Calu3 (cell line): ENCODE measurements at regions of chr13 and their contacts with region 1.

Region 1: DNA sequence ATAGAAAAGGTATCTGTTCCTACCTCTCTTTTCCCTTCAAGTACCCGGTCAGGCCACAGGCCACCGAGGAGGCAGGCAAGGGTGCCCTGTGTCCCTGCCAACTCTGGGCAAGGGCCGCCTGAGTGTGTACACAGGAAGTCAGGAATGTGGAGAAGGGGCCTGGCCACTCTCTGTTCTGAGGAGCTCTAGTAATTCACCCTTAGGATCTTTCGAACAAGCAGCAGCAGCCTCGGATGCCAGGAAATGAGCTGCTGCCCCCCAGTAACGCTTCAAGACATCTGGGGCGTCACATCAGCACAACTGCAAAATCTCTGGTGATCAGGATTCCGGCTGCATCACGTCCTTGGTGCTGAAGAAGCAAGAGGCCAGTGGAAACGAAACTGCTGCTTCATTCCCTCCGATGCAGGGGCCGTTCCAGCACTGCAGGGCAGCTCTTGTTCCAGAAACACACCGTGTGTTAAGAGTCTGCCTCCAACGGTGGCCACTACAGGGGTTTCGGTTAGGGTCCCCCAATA is 2.0 kb downstream of the RAB20 start:
- DNase-seq: no peak
- H3K4me3 Mint-ChIP-seq: peak overlapping the region; percentile 73
- H3K27ac Mint-ChIP-seq: peak overlapping the region; percentile 42
- H3K4me1 Mint-ChIP-seq: peaks cover 29% of the 10 kb centered on the region
- H3K27me3 Mint-ChIP-seq: no peaks in the 10 kb centered on the region
- CTCF ChIP-seq: no peak

Region 2: GRCh38 chr13:110455941-110456340 is 103.5 kb before region 1 on chr13:
- CTCF ChIA-PET with region 1: interaction called, 5 read pairs
- intact Hi-C with region 1: loop called (anchors 10 kb)
- DNase-seq: peak; percentile 53
- H3K4me3 Mint-ChIP-seq: no peak overlapping the region
- H3K27ac Mint-ChIP-seq: no peak overlapping the region
- H3K4me1 Mint-ChIP-seq: peaks cover 8% of the 10 kb centered on the region
- H3K27me3 Mint-ChIP-seq: no peaks in the 10 kb centered on the region
- CTCF ChIP-seq: peak; percentile 19

Region 3: DNA sequence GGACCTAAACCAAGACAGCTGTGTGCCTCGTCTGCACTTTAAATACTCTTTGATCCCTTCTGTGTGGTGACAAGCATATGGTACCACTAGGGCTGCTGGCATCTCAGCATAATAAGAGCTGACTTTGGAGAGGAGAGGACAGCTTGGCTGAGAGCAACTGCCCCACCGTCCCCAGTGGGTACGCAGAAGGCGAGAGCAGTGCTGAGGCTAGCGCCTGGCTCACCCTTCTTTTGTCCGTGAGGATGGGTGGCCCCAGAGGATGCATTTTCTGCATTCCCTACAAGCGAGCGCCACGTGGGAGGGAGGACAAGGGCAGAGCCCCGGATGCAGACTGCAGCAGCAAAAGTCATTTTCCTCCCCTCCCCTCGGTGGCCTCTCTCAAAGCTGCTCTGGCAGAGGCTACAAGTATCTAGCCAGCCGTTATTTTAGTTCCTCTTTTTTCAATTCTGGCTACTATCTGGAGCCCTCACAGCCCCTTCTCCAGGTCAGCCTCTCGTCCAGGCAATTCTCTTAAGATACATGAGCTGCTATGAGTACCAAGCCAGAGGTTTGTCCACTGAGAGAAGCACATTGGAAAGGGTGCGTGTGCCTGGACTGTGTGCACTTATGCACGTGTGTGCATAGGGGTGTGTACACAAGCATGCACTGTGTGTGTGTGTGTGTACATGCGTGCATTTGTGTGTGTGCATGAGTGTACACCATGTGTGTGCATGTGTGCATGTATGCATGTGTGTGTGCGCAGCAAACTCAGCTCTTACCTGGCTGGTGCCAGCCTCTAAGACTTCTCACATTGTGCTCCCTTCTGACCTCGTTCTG is 49.3 kb before region 1 on chr13:
- CTCF ChIA-PET with region 1: interaction called, 3 read pairs
- intact Hi-C with region 1: loop called (anchors 10 kb)
- DNase-seq: no peak
- H3K4me3 Mint-ChIP-seq: no peak overlapping the region
- H3K27ac Mint-ChIP-seq: no peak overlapping the region
- H3K4me1 Mint-ChIP-seq: no peaks in the 10 kb centered on the region
- H3K27me3 Mint-ChIP-seq: no peaks in the 10 kb centered on the region
- CTCF ChIP-seq: no peak

Region 4: GRCh38 chr13:110525328-110526319 is 33.9 kb before region 1 on chr13:
- CTCF ChIA-PET with region 1: no interaction called
- intact Hi-C with region 1: loop called (anchors 1 kb)
- DNase-seq: no peak
- H3K4me3 Mint-ChIP-seq: peak overlapping the region; percentile 19
- H3K27ac Mint-ChIP-seq: no peak overlapping the region
- H3K4me1 Mint-ChIP-seq: peaks cover 8% of the 10 kb centered on the region
- H3K27me3 Mint-ChIP-seq: no peaks in the 10 kb centered on the region
- CTCF ChIP-seq: no peak

Region 5: DNA sequence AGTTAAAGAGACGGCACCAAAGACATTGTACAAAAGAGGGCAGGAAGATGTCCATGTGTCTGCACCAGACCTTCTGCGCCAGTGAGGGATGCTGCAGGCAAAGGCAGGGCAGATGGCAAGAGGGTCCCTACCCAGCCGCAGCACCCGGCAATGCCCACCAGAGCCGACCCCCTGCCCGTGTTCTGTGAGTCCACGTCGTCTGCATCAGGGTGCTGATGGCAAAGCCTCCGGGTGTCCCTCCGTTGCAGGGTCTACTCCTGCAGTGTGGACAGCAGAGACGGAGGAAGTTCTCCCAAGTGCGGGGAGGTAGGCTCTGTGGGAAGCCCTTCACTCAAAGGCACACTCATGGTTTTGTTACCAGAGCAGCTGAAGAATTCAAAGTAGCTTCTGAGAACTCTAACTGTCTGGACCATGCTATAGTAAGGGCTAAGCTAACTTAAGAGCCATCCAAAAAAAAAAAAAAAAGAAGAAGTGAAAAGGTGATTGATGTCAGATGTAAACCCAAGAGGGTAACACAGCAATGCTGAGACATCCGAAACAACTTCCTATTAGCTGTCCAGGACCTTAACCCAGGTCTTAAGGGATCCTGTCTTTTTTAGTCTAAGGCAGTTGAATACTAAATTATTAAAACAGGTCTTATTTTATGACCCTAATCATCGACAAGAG is 13.1 kb after region 1 on chr13:
- CTCF ChIA-PET with region 1: no interaction called
- intact Hi-C with region 1: no loop called
- DNase-seq: no peak
- H3K4me3 Mint-ChIP-seq: no peak overlapping the region
- H3K27ac Mint-ChIP-seq: no peak overlapping the region
- H3K4me1 Mint-ChIP-seq: no peaks in the 10 kb centered on the region
- H3K27me3 Mint-ChIP-seq: no peaks in the 10 kb centered on the region
- CTCF ChIP-seq: no peak